CD4-positive, alpha-beta memory T cell (primary cell): ENCODE measurements at regions of chr5 and their contacts with region 1.

Region 1: GRCh38 chr5:53109443-53110127 is at the start of gene MOCS2:
- DNase-seq: peak; percentile 86 to 93 (median 91)
- H3K4me3 ChIP-seq: peak within 1 kb of the TSS; percentile 82 to 97
- H3K4me3 Mint-ChIP-seq: peak within 1 kb of the TSS; percentile 90 to 98 (median 95)
- H3K27ac ChIP-seq: peak within 1 kb of the TSS; percentile 68
- H3K27ac Mint-ChIP-seq: peak within 1 kb of the TSS; percentile 75 to 97 (median 95)
- H3K4me1 ChIP-seq: peaks cover 34% of the 10 kb centered on the region
- H3K4me1 Mint-ChIP-seq: peaks cover 31 to 59% (median 40%) of the 10 kb centered on the region in 4 donors
- H3K27me3 ChIP-seq: no peaks in the 10 kb centered on the region
- H3K27me3 Mint-ChIP-seq: no peaks in the 10 kb centered on the region
- total RNA-seq, gene MOCS2: 23.1 to 26.6 TPM

Region 2: GRCh38 chr5:53095931-53096525 is 13.6 kb before region 1 on chr5:
- CTCF ChIA-PET with region 1: interaction called, 10 read pairs
- POLR2A ChIA-PET with region 1: interaction called, 5 read pairs
- intact Hi-C with region 1: no loop called
- DNase-seq: peak; percentile 58 to 67 (median 59)
- H3K4me3 ChIP-seq: no peak overlapping the region
- H3K4me3 Mint-ChIP-seq: no peak overlapping the region
- H3K27ac ChIP-seq: no peak overlapping the region
- H3K27ac Mint-ChIP-seq: no peak overlapping the region
- H3K4me1 ChIP-seq: no peaks in the 10 kb centered on the region
- H3K4me1 Mint-ChIP-seq: no peaks in the 10 kb centered on the region
- H3K27me3 ChIP-seq: no peaks in the 10 kb centered on the region
- H3K27me3 Mint-ChIP-seq: no peaks in the 10 kb centered on the region